B cell (primary cell): ENCODE measurements at regions of chr17 and their contacts with region 1.

Region 1: DNA sequence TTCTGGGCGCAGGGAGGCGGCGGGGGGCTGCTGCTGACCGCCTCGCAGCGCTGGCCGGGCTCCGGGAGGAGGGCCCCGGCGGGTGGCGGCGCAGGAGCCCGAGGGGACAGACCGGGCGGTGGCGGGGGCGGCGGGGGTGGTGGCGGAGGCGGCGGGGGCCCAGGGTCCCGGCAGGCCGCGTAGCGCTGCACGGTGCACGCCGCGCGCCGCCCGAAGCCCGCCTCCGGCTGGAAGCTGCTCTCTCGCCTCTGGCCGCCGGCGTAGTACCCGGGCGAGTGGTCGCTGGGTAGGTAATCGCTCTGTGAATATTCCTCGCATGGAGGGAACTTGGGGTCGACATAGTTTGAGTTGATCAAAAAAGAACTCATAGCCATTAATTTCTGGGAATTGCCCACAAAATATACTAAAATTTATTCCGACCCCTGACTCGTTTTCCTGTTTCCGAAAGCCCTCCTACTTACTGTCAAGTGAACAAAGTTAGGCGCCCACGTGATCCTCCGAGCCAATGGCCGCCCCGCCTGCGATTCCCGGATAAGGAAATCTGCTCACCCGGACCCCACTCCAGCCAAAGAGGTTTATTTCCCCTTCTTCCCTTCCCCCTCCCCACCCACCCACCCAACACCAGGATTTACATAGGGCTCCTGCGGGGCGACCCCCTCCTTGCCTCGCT is at the start of gene HOXB4:
- DNase-seq: peak; percentile 77
- ATAC-seq: peak; percentile 72
- H3K4me3 ChIP-seq: peak within 1 kb of the TSS; percentile 48 to 77 (median 61)
- H3K4me3 Mint-ChIP-seq: peak within 1 kb of the TSS; percentile 88
- H3K27ac ChIP-seq: no peak within 1 kb of the TSS
- H3K27ac Mint-ChIP-seq: peak within 1 kb of the TSS; percentile 80
- H3K4me1 ChIP-seq: peaks cover 50 to 55% of the 10 kb centered on the region in 2 donors
- H3K4me1 Mint-ChIP-seq: peaks cover 49% of the 10 kb centered on the region
- H3K27me3 ChIP-seq: peaks cover 0 to 64% (median 47%) of the 10 kb centered on the region in 4 experiments
- H3K27me3 Mint-ChIP-seq: peaks cover 48% of the 10 kb centered on the region
- CTCF ChIP-seq: no peak
- total RNA-seq, gene HOXB4: 1.5 and 1.7 TPM in 2 replicates

Region 2: DNA sequence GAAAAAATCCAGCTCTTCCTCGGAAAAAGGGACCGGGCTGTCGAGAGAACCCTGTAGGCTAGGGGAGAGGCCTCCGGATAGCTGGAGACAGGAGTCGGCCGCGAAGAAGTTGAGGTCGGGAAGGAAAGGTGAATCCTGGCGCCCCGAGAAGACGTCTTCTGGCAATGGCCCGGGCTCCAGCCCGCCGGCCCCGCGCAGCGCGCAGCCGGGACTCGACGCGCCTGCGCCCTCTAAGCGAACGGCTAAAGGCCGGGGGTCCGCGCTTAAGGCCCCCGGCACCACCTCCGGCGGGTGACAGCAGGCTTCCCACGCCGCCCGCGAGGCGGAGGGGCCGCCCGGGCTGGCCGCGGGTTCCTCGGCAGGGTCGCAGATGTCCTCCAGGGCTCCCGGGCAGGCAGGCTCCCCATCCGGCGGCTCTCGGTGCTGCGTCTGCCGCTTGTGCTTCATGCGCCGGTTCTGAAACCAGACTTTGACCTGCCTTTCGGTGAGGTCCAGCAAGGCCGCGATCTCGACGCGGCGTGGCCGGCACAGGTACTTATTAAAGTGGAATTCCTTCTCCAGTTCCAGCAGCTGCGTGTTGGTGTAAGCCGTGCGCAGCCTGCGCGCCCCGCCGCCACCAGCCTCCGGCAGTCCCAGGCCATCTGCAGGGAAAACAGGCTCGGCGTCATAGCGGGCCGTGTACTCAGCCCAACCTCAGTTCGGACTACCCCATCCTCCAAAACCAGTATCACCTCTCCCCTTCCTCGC is 34.8 kb before region 1 on chr17:
- CTCF ChIA-PET with region 1: no interaction called
- POLR2A ChIA-PET with region 1: no interaction called
- intact Hi-C with region 1: loop called (anchors 2 kb)
- DNase-seq: peak; percentile 84
- ATAC-seq: peak; percentile 65
- H3K4me3 ChIP-seq: peak overlapping the region; percentile 31 to 73 (median 52)
- H3K4me3 Mint-ChIP-seq: peak overlapping the region; percentile 94
- H3K27ac ChIP-seq: peak overlapping the region; percentile 6 to 28
- H3K27ac Mint-ChIP-seq: peak overlapping the region; percentile 90
- H3K4me1 ChIP-seq: peaks cover 42 to 45% of the 10 kb centered on the region in 2 donors
- H3K4me1 Mint-ChIP-seq: peaks cover 31% of the 10 kb centered on the region
- H3K27me3 ChIP-seq: peaks cover 0 to 67% (median 28%) of the 10 kb centered on the region in 4 experiments
- H3K27me3 Mint-ChIP-seq: peaks cover 53% of the 10 kb centered on the region
- CTCF ChIP-seq: peak; percentile 17

Region 3: DNA sequence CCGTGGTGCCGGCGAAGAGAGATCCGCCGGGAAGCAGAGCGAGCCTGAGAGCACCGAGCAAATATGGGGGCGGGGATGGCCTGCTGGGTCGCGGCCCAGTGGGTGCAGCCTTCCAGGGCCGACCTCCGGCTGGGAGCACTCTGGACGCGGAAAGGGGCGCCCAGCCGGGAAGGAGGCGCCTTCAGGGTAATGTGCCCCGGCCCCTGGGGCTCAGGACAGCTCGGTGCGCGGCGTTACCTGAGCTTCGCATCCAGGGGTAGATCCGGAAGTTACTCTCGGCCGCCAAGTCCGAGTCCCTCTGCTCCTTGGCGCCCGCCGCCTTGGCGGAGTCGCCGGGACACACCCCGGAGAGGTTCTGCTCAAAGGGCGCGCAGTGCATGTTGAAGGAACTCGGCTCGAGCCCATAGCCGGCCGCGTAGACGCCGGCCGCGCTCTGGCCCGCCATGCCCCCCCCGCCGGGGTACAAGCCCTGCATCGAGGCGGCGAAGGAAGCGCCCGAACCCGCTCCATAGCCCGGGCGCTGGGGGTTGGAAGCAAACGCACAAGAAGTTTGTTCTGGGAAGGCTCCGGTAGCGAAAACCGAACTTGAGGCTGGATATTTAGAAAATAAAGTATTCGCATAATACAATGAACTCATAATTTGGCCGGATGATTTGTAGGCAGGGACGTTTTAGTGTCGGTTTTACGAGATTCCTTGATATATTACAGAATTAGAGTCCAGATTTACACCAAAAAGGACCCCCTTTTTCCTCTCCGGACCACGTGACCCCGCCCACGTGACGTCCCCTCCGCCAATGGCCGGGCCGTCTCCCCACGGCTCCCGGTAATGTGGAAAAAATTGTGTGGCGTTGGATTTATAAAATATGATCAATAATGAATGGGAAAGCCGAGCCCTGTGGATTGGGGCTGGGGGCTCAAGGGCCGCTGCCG is 32.5 kb after region 1 on chr17 and contains the start of gene HOXB7:
- CTCF ChIA-PET with region 1: interaction called, 3 read pairs
- POLR2A ChIA-PET with region 1: no interaction called
- intact Hi-C with region 1: loop called (anchors 5 kb)
- DNase-seq: peak; percentile 73
- ATAC-seq: peak; percentile 46
- H3K4me3 ChIP-seq: peak within 1 kb of the TSS; percentile 36 to 96 (median 87)
- H3K4me3 Mint-ChIP-seq: peak within 1 kb of the TSS; percentile 92
- H3K27ac ChIP-seq: no peak within 1 kb of the TSS
- H3K27ac Mint-ChIP-seq: peak within 1 kb of the TSS; percentile 69
- H3K4me1 ChIP-seq: peaks cover 52 to 61% of the 10 kb centered on the region in 2 donors
- H3K4me1 Mint-ChIP-seq: peaks cover 39% of the 10 kb centered on the region
- H3K27me3 ChIP-seq: peaks cover 2 to 85% (median 58%) of the 10 kb centered on the region in 4 experiments
- H3K27me3 Mint-ChIP-seq: peaks cover 69% of the 10 kb centered on the region
- CTCF ChIP-seq: no peak
- total RNA-seq, gene HOXB7: 0.36 and 1.3 TPM in 2 replicates